GM12878 (cell line): ENCODE measurements at regions of chr11 and their contacts with region 1.

Region 1: DNA sequence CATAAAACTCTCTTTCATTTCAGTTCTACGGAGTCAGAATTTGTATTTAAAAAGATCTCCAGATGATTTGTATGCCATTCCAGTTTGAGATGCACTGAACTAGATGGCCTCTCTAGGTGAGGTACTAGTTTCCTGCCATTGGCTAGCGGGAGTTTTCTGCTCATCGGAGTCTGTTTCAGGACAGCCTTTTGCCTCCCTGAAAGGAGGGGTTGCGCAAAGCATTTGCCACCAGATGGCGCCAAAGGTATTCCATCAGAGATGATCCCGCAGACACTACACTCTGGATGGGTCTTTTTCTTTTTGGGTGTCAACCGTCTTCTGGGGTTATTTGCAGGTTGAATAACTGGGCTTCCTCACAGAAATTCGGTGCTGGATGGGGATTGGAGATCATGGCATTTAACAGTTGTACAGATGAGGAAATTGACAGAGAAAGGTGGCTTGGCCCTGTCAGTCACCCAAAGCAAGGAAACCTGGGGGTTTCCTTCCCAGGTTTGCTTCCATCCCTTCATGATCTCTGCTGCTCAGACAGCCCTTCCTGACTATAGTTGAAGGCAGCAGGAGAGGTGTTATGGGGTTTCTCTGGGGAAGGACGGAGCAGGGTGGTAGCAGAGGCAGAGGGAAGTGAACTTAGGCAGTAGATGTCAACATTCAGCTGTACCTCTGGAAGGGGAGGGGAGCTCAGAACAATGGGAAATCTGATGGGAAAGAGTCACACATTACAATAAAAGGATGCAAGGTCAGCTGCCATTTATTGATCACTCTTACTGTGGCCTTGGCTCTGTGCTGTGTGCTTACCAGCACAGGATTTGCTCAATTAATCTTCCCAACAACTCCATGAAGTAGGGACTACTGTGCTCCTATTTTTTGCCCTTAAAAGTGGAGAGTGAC is 81.6 kb downstream of the CCDC81 start:
- DNase-seq: peak; percentile 25
- ATAC-seq: peak; percentile 97
- H3K4me3 ChIP-seq: no peak overlapping the region
- H3K27ac ChIP-seq: no peak overlapping the region
- H3K4me1 ChIP-seq: no peaks in the 10 kb centered on the region
- H3K27me3 ChIP-seq: no peaks in the 10 kb centered on the region
- CTCF ChIP-seq: peak; percentile 85 to 88 (median 87)
- EP300 ChIP-seq: no peak
- POLR2A ChIP-seq: no peak
- RAD21 ChIP-seq: peak; percentile 96

Region 2: DNA sequence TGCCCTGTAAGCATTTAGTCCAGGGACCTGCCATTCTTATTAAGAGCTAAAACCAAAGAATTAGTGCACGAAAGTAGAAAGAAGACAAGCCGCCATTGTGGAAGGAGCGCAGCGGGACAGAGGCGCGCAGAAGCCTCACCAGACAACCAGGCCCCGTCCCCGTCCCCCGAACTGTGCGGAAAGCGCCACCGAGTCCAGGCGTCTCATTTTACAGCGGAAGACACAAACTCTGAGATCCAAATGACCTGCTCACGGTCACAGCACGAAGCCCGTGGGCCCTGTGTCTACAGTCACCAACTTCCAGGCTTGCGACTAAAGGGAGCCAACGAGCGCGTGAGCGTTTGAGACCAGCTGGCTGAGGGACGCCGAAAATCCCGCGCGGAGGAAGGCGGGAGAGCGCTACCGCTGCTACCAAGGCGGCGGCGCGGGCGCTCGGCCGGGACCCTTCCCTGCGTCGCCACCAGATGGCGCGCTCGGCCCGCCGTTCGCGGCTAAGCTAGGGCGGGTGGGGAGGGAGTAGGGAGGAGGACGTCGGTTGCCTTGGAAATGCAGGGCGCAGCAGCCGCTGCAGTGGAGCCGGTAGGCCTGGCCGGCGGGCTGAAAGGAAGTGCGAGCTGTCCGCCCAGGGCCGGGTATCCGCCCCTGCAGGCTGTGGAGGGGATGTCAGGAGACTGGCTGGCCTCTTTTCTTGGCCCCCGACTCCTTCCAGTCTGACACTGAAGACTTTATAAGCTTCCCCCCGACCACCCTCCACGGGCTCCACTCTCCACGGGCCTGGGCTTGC is 601.5 kb before region 1 on chr11:
- CTCF ChIA-PET with region 1: interaction called, 9 read pairs
- POLR2A ChIA-PET with region 1: no interaction called
- RAD21 ChIA-PET with region 1: interaction called, 6 read pairs
- SMC1A ChIA-PET with region 1: interaction called, 3 read pairs
- in situ Hi-C with region 1: no loop called
- intact Hi-C with region 1: loop called (anchors 10 kb)
- DNase-seq: peak; percentile 57
- ATAC-seq: peak; percentile 100
- H3K4me3 ChIP-seq: peak overlapping the region; percentile 75
- H3K27ac ChIP-seq: peak overlapping the region; percentile 27; the same call in 1 of the 2 replicates
- H3K4me1 ChIP-seq: peaks cover 8% of the 10 kb centered on the region
- H3K27me3 ChIP-seq: no peaks in the 10 kb centered on the region
- CTCF ChIP-seq: peak; percentile 77 to 95 (median 82)
- EP300 ChIP-seq: no peak
- POLR2A ChIP-seq: peak; percentile 71
- RAD21 ChIP-seq: peak; percentile 83

Region 3: DNA sequence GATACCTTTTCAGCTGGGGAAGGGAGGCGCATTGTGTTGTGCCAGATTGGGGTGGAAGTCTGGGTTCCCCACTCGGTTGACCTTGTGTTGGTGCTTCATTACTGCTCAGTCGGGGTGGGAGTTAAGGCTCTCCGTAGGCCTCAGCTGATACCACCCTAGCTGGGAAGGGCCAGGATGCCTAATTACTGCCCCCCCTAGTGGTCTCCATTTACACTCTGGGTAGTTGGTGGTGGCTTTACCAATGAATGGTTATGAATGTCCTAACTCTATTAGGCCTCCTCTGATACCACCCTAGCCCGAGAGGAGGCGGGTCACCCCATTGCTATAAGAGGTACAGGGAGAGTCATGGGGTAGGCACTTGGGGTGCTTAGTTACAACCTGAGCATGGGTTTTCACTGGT is 181.8 kb before region 1 on chr11:
- CTCF ChIA-PET with region 1: no interaction called
- POLR2A ChIA-PET with region 1: no interaction called
- RAD21 ChIA-PET with region 1: no interaction called
- SMC1A ChIA-PET with region 1: no interaction called
- in situ Hi-C with region 1: no loop called
- intact Hi-C with region 1: no loop called
- DNase-seq: no peak
- ATAC-seq: peak; percentile 58
- H3K4me3 ChIP-seq: no peak overlapping the region
- H3K27ac ChIP-seq: no peak overlapping the region
- H3K4me1 ChIP-seq: 0 out of 2 replicates have a peak, but pooled peaks cover 3% of the 10 kb centered on the region
- H3K27me3 ChIP-seq: no peaks in the 10 kb centered on the region
- CTCF ChIP-seq: peak; percentile 10 to 24 (median 17); a peak in 1 of 6 replicates
- EP300 ChIP-seq: no peak
- POLR2A ChIP-seq: no peak
- RAD21 ChIP-seq: no peak

Region 4: GRCh38 chr11:86415026-86415425 is 41.3 kb before region 1 on chr11:
- CTCF ChIA-PET with region 1: no interaction called
- POLR2A ChIA-PET with region 1: no interaction called
- RAD21 ChIA-PET with region 1: no interaction called
- SMC1A ChIA-PET with region 1: no interaction called
- in situ Hi-C with region 1: no loop called
- intact Hi-C with region 1: no loop called
- DNase-seq: no peak
- ATAC-seq: no peak
- H3K4me3 ChIP-seq: no peak overlapping the region
- H3K27ac ChIP-seq: no peak overlapping the region
- H3K4me1 ChIP-seq: no peaks in the 10 kb centered on the region; the same call in 1 of the 2 replicates
- H3K27me3 ChIP-seq: no peaks in the 10 kb centered on the region
- CTCF ChIP-seq: no peak
- EP300 ChIP-seq: no peak
- POLR2A ChIP-seq: no peak
- RAD21 ChIP-seq: no peak

Region 5: DNA sequence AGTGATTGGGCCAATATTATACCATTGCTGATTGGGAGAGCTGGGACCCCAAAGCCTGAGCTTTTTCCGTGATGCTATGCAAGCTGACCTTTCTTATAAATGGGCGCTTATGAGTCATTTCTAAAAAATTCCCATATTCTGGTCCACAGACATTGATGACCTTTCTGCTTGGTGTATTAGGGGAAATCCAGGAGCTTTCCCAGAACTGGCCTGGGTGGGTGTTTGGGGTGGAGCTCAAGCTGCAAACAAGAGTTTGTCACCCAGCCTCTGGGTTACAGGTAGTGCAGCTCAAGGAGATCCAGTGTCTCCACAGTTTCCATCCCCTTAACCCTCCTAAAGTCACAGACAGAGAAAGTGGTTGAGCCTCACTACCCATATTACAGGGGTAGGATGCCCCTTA is 13.9 kb before region 1 on chr11:
- CTCF ChIA-PET with region 1: interaction called, 14 read pairs
- POLR2A ChIA-PET with region 1: no interaction called
- RAD21 ChIA-PET with region 1: interaction called, 3 read pairs
- SMC1A ChIA-PET with region 1: interaction called, 8 read pairs
- in situ Hi-C with region 1: no loop called
- intact Hi-C with region 1: no loop called
- DNase-seq: no peak
- ATAC-seq: no peak
- H3K4me3 ChIP-seq: no peak overlapping the region
- H3K27ac ChIP-seq: no peak overlapping the region
- H3K4me1 ChIP-seq: peaks cover 11% of the 10 kb centered on the region
- H3K27me3 ChIP-seq: no peaks in the 10 kb centered on the region
- CTCF ChIP-seq: no peak
- EP300 ChIP-seq: no peak
- POLR2A ChIP-seq: no peak
- RAD21 ChIP-seq: no peak

Region 6: DNA sequence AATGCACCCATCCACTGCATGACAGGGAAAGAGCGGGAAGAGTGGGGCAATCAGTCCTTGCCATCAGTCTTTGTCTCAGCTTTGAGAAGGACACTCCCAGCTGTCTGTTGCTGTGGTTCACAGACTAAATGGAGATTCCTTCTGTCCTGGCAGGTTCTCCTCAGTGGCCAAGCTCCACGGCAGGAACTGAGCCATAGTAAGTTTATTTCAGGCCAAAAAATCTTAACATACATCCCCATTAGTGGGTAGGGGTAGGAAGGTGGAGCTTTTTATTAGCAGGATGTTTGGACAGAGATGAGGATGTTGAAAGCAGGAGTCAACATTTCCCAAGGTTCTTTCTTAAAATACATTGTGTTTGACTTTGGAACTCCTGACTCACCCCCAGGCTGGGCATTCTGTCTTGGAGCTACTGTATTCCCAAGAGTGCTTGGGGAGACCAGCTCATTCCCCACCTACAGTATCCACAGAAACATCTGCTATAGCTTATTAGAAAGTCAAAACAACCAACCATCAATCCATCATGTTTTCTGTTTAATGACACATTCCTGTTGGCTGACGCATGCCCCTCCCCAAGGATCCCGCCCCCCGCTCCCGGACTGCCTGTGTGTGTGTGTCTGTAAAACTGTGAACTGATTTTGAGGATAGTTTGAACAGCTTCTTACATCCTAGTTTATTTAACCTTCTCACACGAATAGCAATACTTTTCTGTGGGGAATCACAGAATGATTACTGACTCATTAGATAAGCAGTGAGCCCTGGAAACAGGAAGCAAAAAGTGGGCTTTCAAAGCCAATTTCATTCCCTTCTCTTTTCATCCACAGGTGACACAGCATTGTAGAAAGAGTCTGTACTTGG is 27.9 kb after region 1 on chr11:
- CTCF ChIA-PET with region 1: interaction called, 26 read pairs
- POLR2A ChIA-PET with region 1: no interaction called
- RAD21 ChIA-PET with region 1: interaction called, 5 read pairs
- SMC1A ChIA-PET with region 1: interaction called, 5 read pairs
- in situ Hi-C with region 1: no loop called
- intact Hi-C with region 1: no loop called
- DNase-seq: no peak
- ATAC-seq: no peak
- H3K4me3 ChIP-seq: no peak overlapping the region
- H3K27ac ChIP-seq: no peak overlapping the region
- H3K4me1 ChIP-seq: no peaks in the 10 kb centered on the region
- H3K27me3 ChIP-seq: peaks cover 0 to 2% of the 10 kb centered on the region in 2 experiments; a peak in 1 of 4 replicates
- CTCF ChIP-seq: no peak
- EP300 ChIP-seq: no peak
- POLR2A ChIP-seq: no peak
- RAD21 ChIP-seq: no peak

Region 7: DNA sequence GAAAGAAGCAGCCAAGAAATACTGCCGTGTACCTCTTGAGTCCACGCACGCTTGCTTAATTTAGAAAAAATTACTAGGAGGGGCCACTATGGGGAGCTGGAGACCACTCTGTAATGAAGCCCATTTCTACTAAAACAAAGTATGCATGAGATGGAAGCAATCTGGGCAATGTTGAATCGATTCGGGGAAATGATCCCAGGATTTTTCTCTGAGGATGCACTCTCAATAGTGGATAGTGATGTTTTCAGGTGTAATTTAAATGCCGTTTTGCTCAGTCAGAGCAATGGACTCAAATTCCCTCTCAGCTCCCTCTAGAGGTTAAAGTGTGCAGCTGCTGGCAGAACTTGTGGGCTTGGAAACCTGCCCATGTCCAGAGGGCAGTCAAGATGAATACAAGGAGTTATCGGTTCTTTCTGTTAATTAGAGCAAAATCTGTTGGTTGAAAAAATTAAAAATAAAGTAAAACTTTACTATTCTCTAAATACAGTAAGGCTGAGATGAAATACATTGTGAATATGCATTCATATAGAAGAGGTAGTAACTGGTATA is 152.0 kb after region 1 on chr11:
- CTCF ChIA-PET with region 1: interaction called, 156 read pairs
- POLR2A ChIA-PET with region 1: no interaction called
- RAD21 ChIA-PET with region 1: interaction called, 87 read pairs
- SMC1A ChIA-PET with region 1: interaction called, 96 read pairs
- in situ Hi-C with region 1: loop called (anchors 5 kb)
- intact Hi-C with region 1: loop called (anchors 1 kb)
- DNase-seq: peak; percentile 21
- ATAC-seq: peak; percentile 96
- H3K4me3 ChIP-seq: no peak overlapping the region
- H3K27ac ChIP-seq: no peak overlapping the region
- H3K4me1 ChIP-seq: no peaks in the 10 kb centered on the region
- H3K27me3 ChIP-seq: no peaks in the 10 kb centered on the region
- CTCF ChIP-seq: peak; percentile 68 to 92 (median 88)
- EP300 ChIP-seq: no peak
- POLR2A ChIP-seq: no peak
- RAD21 ChIP-seq: peak; percentile 58

Region 8: GRCh38 chr11:86818466-86819192 is 362.3 kb after region 1 on chr11:
- CTCF ChIA-PET with region 1: interaction called, 33 read pairs
- POLR2A ChIA-PET with region 1: no interaction called
- RAD21 ChIA-PET with region 1: interaction called, 14 read pairs
- SMC1A ChIA-PET with region 1: interaction called, 19 read pairs
- in situ Hi-C with region 1: loop called (anchors 5 kb)
- intact Hi-C with region 1: loop called (anchors 1 kb)
- DNase-seq: peak; percentile 7
- ATAC-seq: peak; percentile 72
- H3K4me3 ChIP-seq: no peak overlapping the region
- H3K27ac ChIP-seq: no peak overlapping the region
- H3K4me1 ChIP-seq: no peaks in the 10 kb centered on the region
- H3K27me3 ChIP-seq: no peaks in the 10 kb centered on the region; a peak in 2 of 4 replicates
- CTCF ChIP-seq: peak; percentile 50 to 73 (median 65); a peak in 5 of 6 replicates
- EP300 ChIP-seq: no peak
- POLR2A ChIP-seq: no peak
- RAD21 ChIP-seq: peak; percentile 91

Region 9: GRCh38 chr11:87463486-87464102 is 1007.3 kb after region 1 on chr11:
- CTCF ChIA-PET with region 1: no interaction called
- POLR2A ChIA-PET with region 1: no interaction called
- RAD21 ChIA-PET with region 1: no interaction called
- SMC1A ChIA-PET with region 1: no interaction called
- in situ Hi-C with region 1: no loop called
- intact Hi-C with region 1: no loop called
- DNase-seq: no peak
- ATAC-seq: peak; percentile 57
- H3K4me3 ChIP-seq: no peak overlapping the region
- H3K27ac ChIP-seq: no peak overlapping the region
- H3K4me1 ChIP-seq: no peaks in the 10 kb centered on the region
- H3K27me3 ChIP-seq: no peaks in the 10 kb centered on the region
- CTCF ChIP-seq: peak; percentile 15 to 42 (median 31); a peak in 4 of 6 replicates
- EP300 ChIP-seq: no peak
- POLR2A ChIP-seq: no peak
- RAD21 ChIP-seq: peak; percentile 68